CD8-positive, alpha-beta T cell (primary cell): ENCODE measurements at regions of chr11 and their contacts with region 1.

Region 1: GRCh38 chr11:90614318-90614717 is 391.5 kb upstream of the CHORDC1 start:
- DNase-seq: no peak
- ATAC-seq: no peak
- H3K4me3 ChIP-seq: no peak overlapping the region
- H3K4me3 Mint-ChIP-seq: no peak overlapping the region
- H3K27ac ChIP-seq: no peak overlapping the region
- H3K27ac Mint-ChIP-seq: no peak overlapping the region
- H3K4me1 ChIP-seq: no peaks in the 10 kb centered on the region
- H3K4me1 Mint-ChIP-seq: no peaks in the 10 kb centered on the region
- H3K27me3 ChIP-seq: no peaks in the 10 kb centered on the region
- H3K27me3 Mint-ChIP-seq: no peaks in the 10 kb centered on the region
- CTCF ChIP-seq: no peak

Region 2: DNA sequence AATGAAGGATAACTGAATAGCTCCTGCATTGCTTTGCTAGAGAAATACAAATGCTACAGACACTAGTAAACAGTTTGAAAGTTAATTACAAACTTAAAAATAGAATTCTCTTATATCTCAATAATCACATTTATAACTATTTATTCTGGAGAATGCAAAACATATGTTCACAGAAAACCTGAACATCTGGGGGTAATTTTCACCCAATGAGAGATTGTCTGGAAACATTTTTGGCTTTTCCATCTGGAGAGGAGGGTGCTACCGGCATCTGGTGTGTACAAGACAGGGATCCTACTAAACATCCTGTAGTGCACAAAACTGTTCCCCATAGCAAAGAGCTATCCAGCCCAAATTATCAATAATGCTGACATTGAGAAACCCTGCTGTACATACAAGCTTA is 13.1 kb before region 1 on chr11:
- CTCF ChIA-PET with region 1: no interaction called
- POLR2A ChIA-PET with region 1: no interaction called
- intact Hi-C with region 1: loop called in 1 of 2 experiments (anchors 1 kb)
- DNase-seq: no peak
- ATAC-seq: no peak
- H3K4me3 ChIP-seq: no peak overlapping the region
- H3K4me3 Mint-ChIP-seq: no peak overlapping the region
- H3K27ac ChIP-seq: no peak overlapping the region
- H3K27ac Mint-ChIP-seq: no peak overlapping the region
- H3K4me1 ChIP-seq: no peaks in the 10 kb centered on the region
- H3K4me1 Mint-ChIP-seq: no peaks in the 10 kb centered on the region
- H3K27me3 ChIP-seq: no peaks in the 10 kb centered on the region
- H3K27me3 Mint-ChIP-seq: no peaks in the 10 kb centered on the region
- CTCF ChIP-seq: no peak